Naive thymus-derived CD4-positive, alpha-beta T cell (primary cell): ENCODE measurements at regions of chr19 and their contacts with region 1.

Region 1: DNA sequence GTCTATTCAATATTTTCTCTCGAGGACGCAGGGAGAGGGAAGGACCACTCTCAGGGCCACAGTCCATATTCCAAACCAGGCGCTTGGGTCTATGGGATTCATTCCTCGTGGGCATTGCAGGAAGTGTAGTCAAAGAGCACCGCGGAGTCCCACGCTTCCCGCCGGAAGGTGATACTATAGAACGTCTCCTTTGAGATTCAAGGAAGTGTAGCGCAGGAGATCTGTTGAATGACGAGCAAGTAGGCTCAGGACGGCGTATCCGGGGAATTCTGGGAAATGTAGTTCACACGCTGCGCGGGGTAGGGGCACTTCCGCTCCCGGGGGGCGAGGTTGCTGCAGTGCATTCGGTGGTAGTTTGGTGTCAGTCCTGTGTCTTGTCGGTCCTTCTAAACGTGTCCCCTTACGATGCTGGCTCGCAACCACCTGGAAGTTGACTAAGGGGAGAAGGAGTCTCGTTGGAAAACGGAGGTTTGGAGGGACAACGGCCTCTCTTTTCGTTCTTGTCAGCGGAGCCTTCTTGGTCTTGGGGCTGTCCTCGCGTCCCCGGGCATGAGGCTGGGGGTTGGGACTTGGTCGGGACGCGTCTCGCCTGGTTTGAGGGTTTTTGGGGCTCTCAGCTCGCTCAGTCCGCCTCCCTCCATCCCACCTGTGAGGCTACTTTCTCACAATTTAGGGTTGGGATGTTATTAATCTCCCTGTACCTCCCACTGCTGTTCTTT is at the start of gene ZNF284:
- DNase-seq: peak; percentile 61 to 88 (median 84)
- ATAC-seq: peak; percentile 99
- H3K4me3 ChIP-seq: peak within 1 kb of the TSS; percentile 85
- H3K4me3 Mint-ChIP-seq: peak within 1 kb of the TSS; percentile 88 to 98 (median 92)
- H3K27ac ChIP-seq: peak within 1 kb of the TSS; percentile 63
- H3K27ac Mint-ChIP-seq: peak within 1 kb of the TSS; percentile 47 to 91 (median 75)
- H3K4me1 ChIP-seq: peaks cover 15 to 17% of the 10 kb centered on the region in 2 donors
- H3K4me1 Mint-ChIP-seq: peaks cover 20 to 40% (median 27%) of the 10 kb centered on the region in 7 donors
- H3K27me3 ChIP-seq: no peaks in the 10 kb centered on the region
- H3K27me3 Mint-ChIP-seq: no peaks in the 10 kb centered on the region
- total RNA-seq, gene ZNF284: 1.9 to 4.4 (median 2.4) TPM

Region 2: GRCh38 chr19:43983912-43984686 is 87.9 kb before region 1 on chr19 and contains the start of gene ZNF155:
- CTCF ChIA-PET with region 1: no interaction called
- POLR2A ChIA-PET with region 1: no interaction called
- intact Hi-C with region 1: loop called in 1 of 2 experiments (anchors 1 kb)
- DNase-seq: peak; percentile 46 to 72 (median 64)
- ATAC-seq: peak; percentile 92
- H3K4me3 ChIP-seq: peak within 1 kb of the TSS; percentile 96
- H3K4me3 Mint-ChIP-seq: peak within 1 kb of the TSS; percentile 89 to 99 (median 96)
- H3K27ac ChIP-seq: peak within 1 kb of the TSS; percentile 79
- H3K27ac Mint-ChIP-seq: peak within 1 kb of the TSS; percentile 72 to 97 (median 93)
- H3K4me1 ChIP-seq: peaks cover 0 to 3% of the 10 kb centered on the region in 2 donors
- H3K4me1 Mint-ChIP-seq: peaks cover 0 to 28% (median 14%) of the 10 kb centered on the region in 7 donors
- H3K27me3 ChIP-seq: no peaks in the 10 kb centered on the region
- H3K27me3 Mint-ChIP-seq: no peaks in the 10 kb centered on the region
- total RNA-seq, gene ZNF155: 5.2 to 13.3 (median 9.1) TPM

Region 3: GRCh38 chr19:44051654-44052402 is 20.2 kb before region 1 on chr19 and contains the start of gene ZNF223:
- CTCF ChIA-PET with region 1: no interaction called
- POLR2A ChIA-PET with region 1: interaction called, 9 read pairs
- intact Hi-C with region 1: loop called in 1 of 2 experiments (anchors 1 kb)
- DNase-seq: peak in 8 of 9 donors; percentile 14 to 52 (median 40)
- ATAC-seq: peak; percentile 85
- H3K4me3 ChIP-seq: peak within 1 kb of the TSS; percentile 58
- H3K4me3 Mint-ChIP-seq: peak within 1 kb of the TSS; percentile 71 to 98 (median 96)
- H3K27ac ChIP-seq: peak within 1 kb of the TSS; percentile 53
- H3K27ac Mint-ChIP-seq: peak within 1 kb of the TSS in 8 of 9 donors; percentile 36 to 91 (median 82)
- H3K4me1 ChIP-seq: no peaks in the 10 kb centered on the region
- H3K4me1 Mint-ChIP-seq: peaks cover 7 to 36% (median 28%) of the 10 kb centered on the region in 7 donors
- H3K27me3 ChIP-seq: no peaks in the 10 kb centered on the region
- H3K27me3 Mint-ChIP-seq: peaks cover 0 to 22% (median 13%) of the 10 kb centered on the region in 5 donors
- total RNA-seq, gene ZNF223: 0.15 to 8.7 (median 2.3) TPM

Region 4: DNA sequence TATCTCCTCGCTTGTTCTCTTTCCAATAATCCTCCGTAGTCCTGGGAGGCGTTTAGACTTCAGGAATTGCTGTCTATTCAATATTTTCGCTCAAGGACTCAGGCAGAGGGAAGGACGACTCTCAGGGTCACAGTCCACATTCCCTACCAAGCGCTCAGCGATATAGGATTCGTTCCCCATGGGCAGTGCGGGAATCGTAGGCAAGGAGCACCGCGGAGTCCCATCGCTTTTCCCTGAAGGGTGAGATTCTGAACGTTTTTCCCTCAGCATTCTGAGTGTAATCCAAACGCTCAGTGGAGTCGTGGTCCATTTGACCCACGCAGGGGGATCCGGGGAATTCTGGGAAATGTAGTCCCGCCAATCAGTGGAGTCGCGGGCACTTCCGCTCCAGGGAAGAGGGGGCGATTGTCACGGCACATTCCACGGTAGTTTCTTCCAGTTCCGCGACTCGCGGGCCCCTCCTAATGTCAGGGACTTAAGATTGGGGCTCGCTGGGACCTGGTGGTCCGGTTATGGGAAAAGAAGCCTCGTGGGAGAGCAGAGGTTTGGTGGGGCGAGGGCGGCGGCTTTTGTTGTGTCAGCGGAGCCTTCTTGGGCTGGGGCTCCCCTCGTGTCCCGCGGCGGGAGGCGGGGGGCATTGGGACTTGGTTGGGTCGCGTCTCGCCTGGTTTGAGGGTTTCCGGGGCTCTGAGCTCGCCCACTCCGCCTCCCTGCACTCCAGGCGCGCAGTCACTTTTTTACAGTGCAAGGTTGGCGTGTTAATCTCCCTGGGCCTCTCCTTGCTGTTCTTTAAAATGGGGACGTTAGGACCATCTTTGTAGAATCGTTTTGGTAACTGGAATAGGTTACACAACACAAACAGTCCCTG is 69.4 kb after region 1 on chr19 and contains the start of gene ZNF234:
- CTCF ChIA-PET with region 1: no interaction called
- POLR2A ChIA-PET with region 1: no interaction called
- intact Hi-C with region 1: loop called (anchors 1 kb)
- DNase-seq: peak; percentile 29 to 69 (median 56)
- ATAC-seq: peak; percentile 92
- H3K4me3 ChIP-seq: peak within 1 kb of the TSS; percentile 80
- H3K4me3 Mint-ChIP-seq: peak within 1 kb of the TSS; percentile 90 to 97 (median 96)
- H3K27ac ChIP-seq: peak within 1 kb of the TSS; percentile 77
- H3K27ac Mint-ChIP-seq: peak within 1 kb of the TSS; percentile 64 to 94 (median 88)
- H3K4me1 ChIP-seq: peaks cover 0 to 12% of the 10 kb centered on the region in 2 donors
- H3K4me1 Mint-ChIP-seq: peaks cover 14 to 30% (median 25%) of the 10 kb centered on the region in 7 donors
- H3K27me3 ChIP-seq: no peaks in the 10 kb centered on the region
- H3K27me3 Mint-ChIP-seq: no peaks in the 10 kb centered on the region
- total RNA-seq, gene ZNF234: 2.8 to 25.2 (median 13.4) TPM

Region 5: GRCh38 chr19:44207126-44207803 is 135.3 kb after region 1 on chr19:
- CTCF ChIA-PET with region 1: no interaction called
- POLR2A ChIA-PET with region 1: no interaction called
- intact Hi-C with region 1: loop called (anchors 1 kb)
- DNase-seq: peak; percentile 25 to 78 (median 70)
- ATAC-seq: peak; percentile 97
- H3K4me3 ChIP-seq: peak overlapping the region; percentile 79
- H3K4me3 Mint-ChIP-seq: peak overlapping the region; percentile 81 to 95 (median 87)
- H3K27ac ChIP-seq: peak overlapping the region; percentile 75
- H3K27ac Mint-ChIP-seq: peak overlapping the region; percentile 79 to 93 (median 84)
- H3K4me1 ChIP-seq: peaks cover 0 to 11% of the 10 kb centered on the region in 2 donors
- H3K4me1 Mint-ChIP-seq: peaks cover 7 to 15% (median 11%) of the 10 kb centered on the region in 7 donors
- H3K27me3 ChIP-seq: no peaks in the 10 kb centered on the region
- H3K27me3 Mint-ChIP-seq: peaks cover 0 to 22% (median 16%) of the 10 kb centered on the region in 5 donors

Region 6: GRCh38 chr19:44304659-44305193 is 232.7 kb after region 1 on chr19 and contains the start of gene ZNF235:
- CTCF ChIA-PET with region 1: no interaction called
- POLR2A ChIA-PET with region 1: no interaction called
- intact Hi-C with region 1: loop called in 1 of 2 experiments (anchors 1 kb)
- DNase-seq: peak; percentile 17 to 77 (median 59)
- ATAC-seq: peak; percentile 97
- H3K4me3 ChIP-seq: peak within 1 kb of the TSS; percentile 84
- H3K4me3 Mint-ChIP-seq: peak within 1 kb of the TSS; percentile 88 to 96 (median 93)
- H3K27ac ChIP-seq: peak within 1 kb of the TSS; percentile 65
- H3K27ac Mint-ChIP-seq: peak within 1 kb of the TSS; percentile 20 to 82 (median 77)
- H3K4me1 ChIP-seq: peaks cover 10 to 12% of the 10 kb centered on the region in 2 donors
- H3K4me1 Mint-ChIP-seq: peaks cover 5 to 34% (median 27%) of the 10 kb centered on the region in 7 donors
- H3K27me3 ChIP-seq: no peaks in the 10 kb centered on the region
- H3K27me3 Mint-ChIP-seq: peaks cover 0 to 10% (median 0%) of the 10 kb centered on the region in 5 donors
- total RNA-seq, gene ZNF235: 5.5 to 14.3 (median 6.7) TPM